ENCODE measurements at regions of chr14 and their contacts with region 1.

Region 1: GRCh38 chr14:93538413-93538812 is 107.7 kb downstream of the UNC79 start:
- DNase-seq: peak in 1 of 2 experiments; percentile 1
- H3K4me3 ChIP-seq: no peak overlapping the region
- H3K27ac ChIP-seq: no peak overlapping the region
- H3K4me1 ChIP-seq: no peaks in the 10 kb centered on the region
- H3K27me3 ChIP-seq: peaks cover 71% of the 10 kb centered on the region
- CTCF ChIP-seq: no peak

Region 2: DNA sequence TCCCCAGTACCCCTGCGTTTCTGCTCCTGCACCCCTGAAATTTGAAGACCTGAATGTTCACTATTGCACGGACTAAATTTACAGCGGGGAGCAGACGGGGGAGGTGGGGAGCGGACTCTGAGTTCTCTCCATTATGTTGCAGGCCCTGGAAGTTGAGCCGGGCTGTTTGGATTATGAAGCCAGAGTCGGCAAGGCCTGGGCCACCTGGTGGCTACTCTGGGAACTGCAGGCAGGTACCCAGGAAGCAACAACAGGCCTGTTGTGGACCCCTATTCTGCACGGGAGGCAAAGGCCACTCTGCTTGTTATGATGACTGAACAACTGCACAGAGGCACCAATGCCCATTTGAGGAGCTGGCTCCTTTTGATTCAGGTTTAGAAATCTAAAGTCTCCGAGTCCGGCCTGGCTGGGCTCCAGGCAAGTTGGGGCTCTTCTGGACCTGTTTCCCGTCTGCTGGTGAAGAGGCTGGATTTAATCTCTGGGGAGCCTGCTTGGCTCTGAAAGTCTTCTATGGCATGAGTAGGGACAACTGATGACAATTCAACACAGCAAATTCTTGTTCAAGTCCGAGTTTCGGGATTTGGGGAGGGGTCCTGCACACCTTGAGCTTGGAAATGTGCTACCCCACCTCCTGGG is 354.6 kb after region 1 on chr14:
- CTCF ChIA-PET with region 1: no interaction called
- POLR2A ChIA-PET with region 1: no interaction called
- intact Hi-C with region 1: no loop called
- DNase-seq: peak in 1 of 2 experiments; percentile 20
- H3K4me3 ChIP-seq: no peak overlapping the region
- H3K27ac ChIP-seq: no peak overlapping the region
- H3K4me1 ChIP-seq: no peaks in the 10 kb centered on the region
- H3K27me3 ChIP-seq: peaks cover 82% of the 10 kb centered on the region
- CTCF ChIP-seq: peak; percentile 93

Region 3: GRCh38 chr14:94015223-94015622 is 476.8 kb after region 1 on chr14:
- CTCF ChIA-PET with region 1: interaction called, 18 read pairs
- POLR2A ChIA-PET with region 1: no interaction called
- intact Hi-C with region 1: no loop called
- DNase-seq: no peak
- H3K4me3 ChIP-seq: no peak overlapping the region
- H3K27ac ChIP-seq: no peak overlapping the region
- H3K4me1 ChIP-seq: peaks cover 22% of the 10 kb centered on the region
- H3K27me3 ChIP-seq: no peaks in the 10 kb centered on the region
- CTCF ChIP-seq: no peak

Measured in PC-9 (cell line).